Activated CD4-positive, alpha-beta memory T cell treated with anti-CD3 and anti-CD28 coated beads, Interleukin-2, amount 10 ng/mL, durations not matched to agents 7 days and 5 days (primary cell): ENCODE measurements at regions of chr7 and their contacts with region 1.

Region 1: DNA sequence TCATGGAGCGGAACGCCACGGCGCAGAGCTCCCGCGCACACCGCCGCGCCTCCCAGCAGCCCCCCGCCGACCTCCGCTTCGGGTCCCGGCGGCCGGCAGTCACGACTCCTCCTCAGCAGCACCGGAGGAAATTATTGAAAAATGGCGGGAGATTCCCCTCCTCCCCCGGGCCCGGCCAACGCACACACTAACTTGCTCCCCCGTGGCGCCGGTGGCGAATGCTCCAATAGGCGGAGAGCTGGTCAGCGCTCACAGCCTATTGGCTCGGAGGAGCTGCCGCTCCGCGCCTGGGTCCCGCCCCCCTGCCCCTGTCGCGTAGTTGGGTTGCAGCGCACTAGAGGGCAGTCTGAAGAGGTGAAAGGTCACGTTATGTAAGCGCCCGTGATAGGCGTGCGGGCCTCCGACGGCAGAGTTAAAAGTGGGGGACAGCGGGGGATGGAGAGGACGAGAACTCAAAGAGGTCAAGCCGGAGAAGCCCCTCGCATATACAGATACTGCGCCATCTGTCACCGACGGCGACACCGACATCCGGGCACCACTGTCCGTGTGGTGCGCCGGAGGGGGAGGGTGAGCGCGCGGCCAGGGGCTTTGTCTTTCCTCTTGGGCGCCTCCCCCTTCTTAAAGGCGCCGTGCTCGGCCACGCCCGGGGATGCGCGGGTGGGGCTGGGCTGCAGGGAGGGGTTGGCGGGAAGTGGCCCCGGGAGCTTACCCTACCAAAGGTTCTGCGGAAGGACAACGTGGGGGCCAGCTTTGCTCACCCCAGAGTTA is at the start of gene BAZ1B:
- DNase-seq: peak; percentile 98
- H3K4me3 Mint-ChIP-seq: peak within 1 kb of the TSS; percentile 92
- H3K27ac Mint-ChIP-seq: peak within 1 kb of the TSS; percentile 88
- H3K4me1 Mint-ChIP-seq: peaks cover 61% of the 10 kb centered on the region
- H3K27me3 Mint-ChIP-seq: no peaks in the 10 kb centered on the region
- total RNA-seq, gene BAZ1B: 84.5 to 86.2 TPM

Region 2: DNA sequence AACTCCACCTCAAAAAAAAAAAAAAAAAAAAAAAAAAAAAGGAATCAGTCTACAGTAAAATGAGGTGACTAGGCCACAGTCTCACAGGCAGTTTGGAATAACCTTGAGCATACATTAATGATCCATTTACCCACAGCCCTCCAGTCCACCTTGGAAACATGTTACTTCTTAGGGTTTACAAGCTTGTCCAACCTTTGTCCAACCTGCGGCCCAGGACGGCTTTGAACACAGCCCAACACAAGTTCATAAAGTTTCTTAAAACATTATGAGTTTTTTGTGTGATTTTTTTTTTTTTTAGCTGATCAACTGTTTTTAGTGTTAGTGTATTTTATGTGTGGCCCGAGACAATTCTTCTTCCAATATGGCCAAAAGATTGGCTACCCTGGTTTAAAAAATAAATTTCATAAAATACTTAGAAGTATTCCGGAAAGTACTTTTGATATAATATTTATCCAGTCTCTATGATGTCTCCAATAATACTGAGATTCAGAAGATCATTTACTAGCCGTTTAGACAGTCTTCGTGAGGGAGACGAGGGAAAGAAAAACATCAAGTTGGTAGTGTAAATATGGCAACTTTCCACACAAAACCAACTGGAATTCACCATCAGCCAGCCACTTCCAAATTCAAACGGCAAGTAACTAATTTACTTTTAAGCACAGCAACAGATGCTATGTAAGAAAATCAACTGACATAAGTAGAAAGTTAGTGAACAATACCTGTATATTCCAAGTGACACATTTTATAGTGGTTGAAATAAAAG is 10.1 kb before region 1 on chr7:
- CTCF ChIA-PET with region 1: interaction called, 5 read pairs
- POLR2A ChIA-PET with region 1: interaction called, 28 read pairs
- DNase-seq: no peak
- H3K4me3 Mint-ChIP-seq: no peak overlapping the region
- H3K27ac Mint-ChIP-seq: no peak overlapping the region
- H3K4me1 Mint-ChIP-seq: peaks cover 21% of the 10 kb centered on the region
- H3K27me3 Mint-ChIP-seq: no peaks in the 10 kb centered on the region

Region 3: DNA sequence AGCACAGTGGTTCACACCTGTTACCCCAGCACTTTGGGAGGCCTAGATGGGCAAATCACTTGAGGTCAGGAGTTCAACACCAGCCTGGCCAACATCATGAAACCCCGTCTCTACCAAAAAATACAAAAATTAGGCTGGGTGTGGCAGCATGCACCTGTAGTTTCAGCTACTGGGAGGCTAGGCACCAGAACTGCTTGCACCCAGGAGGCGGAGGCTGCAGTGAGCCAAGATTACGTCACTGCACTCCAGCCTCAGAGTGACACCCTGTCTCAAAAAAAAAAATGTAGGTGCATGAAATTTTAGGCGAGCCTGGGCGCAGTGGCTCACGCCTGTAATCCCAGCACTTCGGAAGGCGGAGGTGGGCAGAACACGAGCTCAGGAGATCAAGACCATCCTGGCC is 25.6 kb after region 1 on chr7:
- CTCF ChIA-PET with region 1: interaction called, 5 read pairs
- POLR2A ChIA-PET with region 1: interaction called, 16 read pairs
- DNase-seq: no peak
- H3K4me3 Mint-ChIP-seq: no peak overlapping the region
- H3K27ac Mint-ChIP-seq: peak overlapping the region; percentile 19
- H3K4me1 Mint-ChIP-seq: peaks cover 37% of the 10 kb centered on the region
- H3K27me3 Mint-ChIP-seq: no peaks in the 10 kb centered on the region

Region 4: GRCh38 chr7:73565675-73566340 is 43.5 kb after region 1 on chr7:
- CTCF ChIA-PET with region 1: interaction called, 6 read pairs
- POLR2A ChIA-PET with region 1: interaction called, 27 read pairs
- DNase-seq: no peak
- H3K4me3 Mint-ChIP-seq: peak overlapping the region; percentile 69
- H3K27ac Mint-ChIP-seq: peak overlapping the region; percentile 64
- H3K4me1 Mint-ChIP-seq: peaks cover 32% of the 10 kb centered on the region
- H3K27me3 Mint-ChIP-seq: no peaks in the 10 kb centered on the region

Region 5: DNA sequence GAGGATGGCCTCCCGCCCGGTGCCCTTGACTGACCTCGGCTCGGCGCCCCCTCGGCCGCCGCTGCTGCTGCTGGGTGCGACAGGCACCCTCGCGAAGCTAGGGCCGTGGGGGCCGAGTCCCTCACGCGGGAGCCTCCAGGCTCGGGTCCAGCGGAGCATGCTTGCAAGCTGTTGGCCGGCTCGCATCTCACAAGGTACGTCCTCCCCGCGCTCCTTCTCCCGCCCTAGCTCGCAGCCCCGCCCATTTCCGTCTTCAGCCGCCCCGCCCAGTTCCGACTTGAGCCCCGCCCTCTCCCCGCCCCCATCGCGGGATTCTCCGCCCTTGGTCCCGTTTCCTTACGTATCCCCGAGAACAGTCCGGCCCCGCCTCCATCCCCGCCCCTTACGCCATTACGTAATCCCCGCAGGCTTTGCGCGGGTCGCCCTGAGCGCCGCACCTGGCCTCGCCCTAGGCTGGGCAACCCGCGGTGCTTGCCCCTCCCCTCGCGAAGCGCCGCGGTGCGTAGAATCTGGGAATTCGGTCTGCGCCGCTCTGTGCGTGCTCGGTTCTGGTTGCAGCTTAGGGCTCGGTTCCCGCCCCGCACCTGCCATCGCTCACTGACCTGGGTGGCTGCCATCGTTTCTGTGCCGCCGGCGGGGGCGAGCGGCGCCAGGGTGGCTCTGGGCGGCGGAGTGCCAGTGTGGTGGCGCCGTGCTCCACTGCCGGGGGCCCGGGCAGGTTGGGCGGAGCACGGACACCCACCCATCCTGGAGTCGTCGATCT is 216.5 kb after region 1 on chr7 and contains the start of gene ABHD11:
- CTCF ChIA-PET with region 1: interaction called, 5 read pairs
- POLR2A ChIA-PET with region 1: interaction called, 11 read pairs
- DNase-seq: peak; percentile 98
- H3K4me3 Mint-ChIP-seq: peak within 1 kb of the TSS; percentile 86
- H3K27ac Mint-ChIP-seq: peak within 1 kb of the TSS; percentile 92
- H3K4me1 Mint-ChIP-seq: peaks cover 24% of the 10 kb centered on the region
- H3K27me3 Mint-ChIP-seq: no peaks in the 10 kb centered on the region
- total RNA-seq, gene ABHD11: 12.3 to 13.7 TPM